OCI-LY7 (cell line): ENCODE measurements at regions of chr19 and their contacts with region 1.

Region 1: GRCh38 chr19:8005534-8006256 is at the start of gene ELAVL1:
- DNase-seq: peak; percentile 95
- H3K4me3 ChIP-seq: peak within 1 kb of the TSS; percentile 100
- H3K27ac ChIP-seq: peak within 1 kb of the TSS; percentile 64
- H3K4me1 ChIP-seq: peaks cover 26% of the 10 kb centered on the region
- CTCF ChIP-seq: no peak
- total RNA-seq, gene ELAVL1: 43.5 and 65.4 TPM in 2 replicates

Region 2: DNA sequence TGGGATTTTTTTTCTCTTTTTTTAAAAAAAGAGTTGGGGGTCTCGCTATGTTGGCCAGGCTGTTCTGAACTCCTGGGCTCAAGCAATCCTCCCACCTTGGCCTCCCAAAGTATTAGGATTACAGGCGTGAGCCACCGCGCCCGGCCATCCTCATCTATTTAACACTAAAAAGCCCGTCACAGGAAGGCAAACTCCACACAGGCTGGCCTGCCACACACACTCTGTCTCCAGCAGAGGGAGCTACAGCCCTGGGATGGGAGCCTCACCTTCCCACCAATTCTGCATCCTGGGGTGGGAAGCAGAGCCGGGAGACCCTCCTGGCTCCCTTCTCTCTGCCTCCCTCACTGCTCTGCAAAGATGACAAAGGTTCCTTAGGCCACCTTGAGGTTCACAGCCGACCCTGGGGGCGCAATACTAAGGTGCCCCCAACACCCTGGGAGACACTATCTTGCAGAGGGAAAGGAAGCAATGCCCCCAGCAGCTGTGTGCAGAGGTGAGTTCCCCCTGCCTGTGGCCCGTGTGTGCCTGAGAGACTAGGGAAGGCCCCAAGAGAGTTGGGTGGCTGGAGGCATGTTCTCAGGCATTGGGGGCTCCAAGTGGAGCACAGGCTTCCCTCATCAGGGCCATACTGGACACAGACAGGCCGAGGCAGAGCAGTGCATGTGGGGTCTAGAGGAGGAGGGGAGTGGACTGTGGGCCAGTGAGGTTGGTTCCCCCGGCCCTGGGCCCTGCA is 34.8 kb before region 1 on chr19:
- CTCF ChIA-PET with region 1: no interaction called
- POLR2A ChIA-PET with region 1: no interaction called
- intact Hi-C with region 1: loop called (anchors 1 kb)
- DNase-seq: peak; percentile 45
- H3K4me3 ChIP-seq: no peak overlapping the region
- H3K27ac ChIP-seq: no peak overlapping the region
- H3K4me1 ChIP-seq: no peaks in the 10 kb centered on the region
- CTCF ChIP-seq: peak; percentile 88

Region 3: GRCh38 chr19:7981199-7981598 is 24.5 kb before region 1 on chr19:
- CTCF ChIA-PET with region 1: no interaction called
- POLR2A ChIA-PET with region 1: no interaction called
- intact Hi-C with region 1: no loop called
- DNase-seq: no peak
- H3K4me3 ChIP-seq: no peak overlapping the region
- H3K27ac ChIP-seq: no peak overlapping the region
- H3K4me1 ChIP-seq: no peaks in the 10 kb centered on the region
- CTCF ChIP-seq: no peak

Region 4: DNA sequence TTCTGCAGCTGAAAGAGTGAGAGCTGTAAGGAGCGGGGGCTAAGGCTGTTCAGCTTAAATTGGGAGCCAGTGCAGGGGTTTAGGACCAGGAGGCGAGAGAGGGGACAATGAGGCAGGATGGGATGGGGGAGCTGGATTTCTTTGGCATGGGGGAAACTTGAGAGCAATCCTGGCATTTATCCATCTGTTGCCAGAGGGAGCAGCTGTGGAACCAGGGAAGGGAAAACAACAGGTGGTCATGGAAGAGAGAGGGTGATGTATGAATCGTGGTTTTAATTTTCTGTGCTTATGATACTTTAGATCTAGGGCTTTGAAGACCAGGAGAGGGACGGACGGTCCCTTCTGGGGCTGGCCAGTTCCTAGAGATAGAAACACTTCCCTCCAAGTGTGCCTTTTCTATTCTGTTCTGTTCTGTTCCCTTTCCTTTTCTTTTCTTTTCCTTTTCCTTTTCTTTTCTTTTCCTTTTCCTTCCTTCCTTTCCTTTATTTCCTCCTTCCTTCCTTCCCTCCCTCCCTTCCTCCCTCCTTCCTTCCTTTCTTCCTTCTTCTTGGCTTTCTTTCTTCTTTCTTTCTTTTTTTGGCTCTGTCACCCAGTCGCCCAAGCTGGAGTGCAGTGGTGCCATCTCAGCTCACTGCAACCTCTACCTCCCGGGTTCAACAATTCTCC is 30.9 kb after region 1 on chr19:
- CTCF ChIA-PET with region 1: no interaction called
- POLR2A ChIA-PET with region 1: no interaction called
- intact Hi-C with region 1: no loop called
- DNase-seq: no peak
- H3K4me3 ChIP-seq: no peak overlapping the region
- H3K27ac ChIP-seq: no peak overlapping the region
- H3K4me1 ChIP-seq: no peaks in the 10 kb centered on the region
- CTCF ChIP-seq: no peak

Region 5: DNA sequence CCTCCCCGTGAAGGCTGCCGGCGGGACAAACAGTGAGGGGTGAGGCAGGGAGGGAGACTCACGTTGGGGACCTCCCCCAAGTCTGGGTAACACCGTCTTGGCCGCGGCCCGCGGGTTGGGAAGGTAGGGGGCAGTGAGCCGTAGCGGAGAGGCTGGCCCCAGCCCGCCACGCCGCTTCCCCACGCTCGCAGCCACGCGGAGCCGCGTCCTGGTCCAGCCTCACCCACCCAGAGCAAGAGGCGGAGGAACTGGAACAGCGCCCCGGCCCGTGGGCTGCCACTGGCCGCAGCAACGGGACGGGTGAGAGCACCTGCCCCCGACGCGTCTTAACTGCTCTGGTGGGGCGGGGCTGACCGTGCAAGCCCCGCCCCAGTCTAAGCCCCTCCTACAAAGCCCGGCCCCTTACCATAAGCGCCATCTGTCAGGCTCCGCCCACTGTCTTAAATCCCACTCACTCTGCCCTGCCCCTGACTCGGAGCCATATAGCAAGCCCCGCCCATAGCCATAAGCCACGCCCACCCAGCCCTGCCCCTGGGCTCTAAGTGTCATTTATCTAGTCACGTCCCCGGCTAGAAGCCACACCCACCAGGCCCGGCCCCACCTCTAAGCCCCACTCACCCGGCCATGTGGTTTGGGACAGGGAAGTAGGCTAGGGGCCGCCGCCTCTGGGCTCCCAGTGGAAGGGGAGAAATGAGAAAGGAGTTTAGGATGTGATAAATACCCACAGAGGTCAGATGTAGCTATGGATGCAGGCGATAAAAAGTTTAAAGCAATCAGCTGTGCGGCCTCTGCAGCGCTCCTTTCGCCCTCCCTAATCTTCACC is 44.8 kb after region 1 on chr19:
- CTCF ChIA-PET with region 1: no interaction called
- POLR2A ChIA-PET with region 1: no interaction called
- intact Hi-C with region 1: loop called (anchors 2 kb)
- DNase-seq: peak; percentile 98
- H3K4me3 ChIP-seq: peak overlapping the region; percentile 57
- H3K27ac ChIP-seq: no peak overlapping the region
- H3K4me1 ChIP-seq: peaks cover 25% of the 10 kb centered on the region
- CTCF ChIP-seq: no peak

Region 6: GRCh38 chr19:8129060-8129459 is 123.4 kb after region 1 on chr19:
- CTCF ChIA-PET with region 1: no interaction called
- POLR2A ChIA-PET with region 1: no interaction called
- intact Hi-C with region 1: no loop called
- DNase-seq: no peak
- H3K4me3 ChIP-seq: no peak overlapping the region
- H3K27ac ChIP-seq: no peak overlapping the region
- H3K4me1 ChIP-seq: no peaks in the 10 kb centered on the region
- CTCF ChIP-seq: no peak

Region 7: DNA sequence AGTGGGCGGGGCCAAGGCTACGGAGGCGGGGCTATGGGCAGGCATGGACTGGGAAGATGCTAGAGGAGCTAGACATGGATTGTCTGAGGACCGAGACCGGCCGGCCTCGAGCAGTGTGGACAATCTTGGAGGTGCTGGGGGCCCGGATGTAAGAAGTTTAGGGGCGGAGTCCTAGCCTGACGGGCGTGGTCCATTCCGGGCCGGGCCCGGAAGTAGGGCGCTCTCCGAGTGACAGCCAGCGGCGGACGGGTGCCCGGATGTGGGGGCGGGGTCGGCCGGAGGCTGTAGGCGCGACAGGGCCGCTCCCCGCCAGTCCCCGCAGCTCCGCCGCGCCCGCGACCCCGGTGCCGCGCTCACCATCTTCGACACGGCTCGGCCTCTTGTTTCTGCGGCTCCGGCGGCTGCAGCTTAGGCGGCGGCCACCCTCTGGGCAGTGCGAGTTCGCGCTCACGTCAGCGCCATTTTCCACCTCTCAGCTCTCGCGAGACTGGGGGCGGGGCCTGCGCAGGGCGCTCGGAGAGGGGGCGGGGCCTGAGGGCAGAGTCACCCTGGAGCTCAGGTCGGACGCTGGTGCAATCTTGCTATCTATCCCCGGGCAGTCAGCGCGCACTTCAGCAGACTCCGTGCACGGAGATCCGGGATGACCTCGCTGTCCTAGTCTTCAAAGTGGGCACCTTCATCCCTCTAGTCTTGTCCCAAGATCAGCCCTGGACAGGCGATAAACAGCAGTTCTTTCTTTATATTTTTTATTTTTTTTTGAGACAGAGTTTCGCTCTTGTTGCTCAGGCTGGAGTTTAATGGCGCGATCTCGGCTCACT is 508.2 kb after region 1 on chr19 and contains the start of gene ZNF414:
- CTCF ChIA-PET with region 1: no interaction called
- POLR2A ChIA-PET with region 1: no interaction called
- intact Hi-C with region 1: loop called (anchors 5 kb)
- DNase-seq: peak; percentile 96
- H3K4me3 ChIP-seq: peak within 1 kb of the TSS; percentile 69
- H3K27ac ChIP-seq: peak within 1 kb of the TSS; percentile 65
- H3K4me1 ChIP-seq: peaks cover 28% of the 10 kb centered on the region
- CTCF ChIP-seq: no peak
- total RNA-seq, gene ZNF414: 3.1 and 8.7 TPM in 2 replicates